Posterior cingulate gyrus (tissue), 11 donors: ENCODE measurements at regions of chr11 and their contacts with region 1.

Region 1: DNA sequence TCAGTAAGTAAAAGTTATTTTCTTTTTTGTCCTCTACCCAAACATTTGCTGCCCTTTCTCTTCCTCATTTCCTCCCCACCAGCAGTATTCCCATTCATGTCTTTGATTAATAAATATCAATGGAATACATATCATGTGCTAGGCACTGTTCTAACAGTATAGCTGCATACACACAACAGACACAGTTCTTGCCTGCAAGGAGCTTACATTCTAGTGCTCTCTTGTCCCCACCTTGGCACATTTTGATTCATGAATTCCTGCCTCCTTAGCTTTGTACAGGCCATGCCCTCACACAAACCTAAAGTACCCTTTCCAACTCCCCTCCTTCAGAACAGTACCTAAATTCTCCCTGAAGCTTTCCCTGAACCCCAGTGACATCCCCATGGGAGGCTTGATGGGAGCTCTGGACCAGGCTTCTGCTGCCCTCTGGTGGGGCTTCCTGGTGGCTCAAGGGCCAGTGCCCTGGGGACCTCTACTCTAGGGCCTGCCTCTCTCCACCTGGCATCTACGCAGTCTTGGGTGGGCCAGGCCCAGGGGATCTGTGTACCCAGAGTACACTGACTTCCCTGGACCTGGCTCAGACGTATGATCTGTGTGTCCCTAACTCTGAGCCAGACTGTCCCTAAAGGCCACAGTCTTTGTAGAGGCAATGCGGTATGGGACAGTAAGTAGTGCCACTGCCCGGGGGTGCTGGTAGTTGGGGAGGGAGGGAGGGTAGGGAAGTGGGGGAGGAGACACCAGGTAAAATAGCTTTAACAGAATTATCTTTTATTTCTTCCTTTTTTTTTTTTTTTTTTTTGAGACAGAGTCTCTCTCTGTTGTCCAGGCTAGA is 14.1 kb downstream of the RPS13 start:
- DNase-seq: peak in 9 of 10 donors; percentile 24 to 94 (median 72)

Region 2: DNA sequence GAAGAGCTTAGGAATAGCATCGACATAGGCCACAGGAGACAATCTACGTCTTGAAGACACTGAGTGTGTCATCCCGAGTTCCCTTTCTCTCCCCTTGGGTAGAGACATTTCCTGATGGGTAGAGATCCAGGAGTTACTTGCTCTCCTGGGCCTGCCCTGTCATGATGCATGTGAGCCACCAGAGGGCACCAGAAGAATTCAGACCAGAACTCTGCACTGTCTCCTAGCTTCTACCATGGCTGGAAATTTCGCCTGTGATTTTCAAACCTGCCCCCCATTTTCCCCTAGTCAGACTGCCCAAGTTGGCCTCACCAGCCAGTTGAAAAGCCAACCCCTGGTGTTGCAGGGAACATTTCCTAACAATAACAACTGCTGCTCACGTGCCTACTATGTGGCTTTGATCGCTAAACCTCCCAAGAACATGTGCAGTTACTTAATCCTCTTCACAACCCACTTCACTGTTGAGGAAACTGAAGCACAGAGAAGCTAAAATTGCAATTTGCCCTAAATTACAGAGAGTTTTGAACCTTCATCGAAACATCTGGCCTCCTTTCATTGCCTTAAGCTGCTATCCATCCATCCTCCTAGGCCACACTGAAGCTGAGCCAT is 277.8 kb before region 1 on chr11:
- intact Hi-C with region 1: loop called (anchors 2 kb)
- DNase-seq: peak; percentile 63 to 96 (median 77)

Region 3: GRCh38 chr11:16820324-16821092 is 242.9 kb before region 1 on chr11:
- intact Hi-C with region 1: loop called (anchors 2 kb)
- DNase-seq: peak in 9 of 10 donors; percentile 54 to 89 (median 75)

Region 4: DNA sequence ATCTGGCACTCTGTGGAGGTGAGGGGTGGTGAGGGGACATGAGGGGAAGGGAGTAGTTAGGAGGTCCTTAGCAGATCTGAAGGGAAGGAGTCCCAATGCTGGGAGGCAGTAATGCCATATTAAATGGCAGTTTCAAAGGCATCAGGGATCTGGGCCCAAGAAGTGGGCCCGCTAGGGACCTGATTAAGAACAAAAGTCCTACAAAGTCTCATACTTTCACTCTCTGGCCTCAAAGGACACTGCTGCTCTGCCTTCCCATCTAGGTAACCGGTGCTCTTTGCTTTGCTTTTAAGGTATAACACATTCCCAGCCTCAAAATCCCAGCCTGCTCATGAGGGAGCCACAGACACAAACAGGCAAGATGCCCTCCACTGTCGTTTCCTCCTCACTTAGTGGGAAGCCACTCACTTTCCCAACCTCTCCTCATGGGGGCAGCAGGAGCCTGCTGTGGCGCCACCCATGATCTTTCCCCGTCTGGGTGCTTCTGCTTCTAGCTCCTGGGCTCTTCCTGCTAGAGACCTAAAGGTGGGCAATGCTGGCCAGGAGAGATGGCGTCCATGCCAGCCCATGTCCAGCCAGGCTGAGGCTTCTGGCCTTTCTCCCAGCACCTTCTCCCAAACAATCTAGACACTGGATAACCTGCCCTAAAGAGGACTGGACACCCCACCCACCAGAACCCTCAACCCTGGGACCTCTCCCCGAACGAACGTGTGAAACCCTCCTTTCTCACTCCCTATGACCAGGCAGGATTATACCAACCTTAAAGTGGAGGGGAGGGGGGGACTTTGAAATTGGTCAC is 117.5 kb before region 1 on chr11:
- intact Hi-C with region 1: loop called (anchors 1 kb)
- DNase-seq: peak; percentile 27 to 94 (median 68)

Region 5: GRCh38 chr11:17014838-17015626 is 48.4 kb before region 1 on chr11:
- intact Hi-C with region 1: loop called (anchors 10 kb)
- DNase-seq: peak in 2 of 10 donors; percentile 18 to 66